ENCODE measurements at regions of chr14 and their contacts with region 1.

Region 1: DNA sequence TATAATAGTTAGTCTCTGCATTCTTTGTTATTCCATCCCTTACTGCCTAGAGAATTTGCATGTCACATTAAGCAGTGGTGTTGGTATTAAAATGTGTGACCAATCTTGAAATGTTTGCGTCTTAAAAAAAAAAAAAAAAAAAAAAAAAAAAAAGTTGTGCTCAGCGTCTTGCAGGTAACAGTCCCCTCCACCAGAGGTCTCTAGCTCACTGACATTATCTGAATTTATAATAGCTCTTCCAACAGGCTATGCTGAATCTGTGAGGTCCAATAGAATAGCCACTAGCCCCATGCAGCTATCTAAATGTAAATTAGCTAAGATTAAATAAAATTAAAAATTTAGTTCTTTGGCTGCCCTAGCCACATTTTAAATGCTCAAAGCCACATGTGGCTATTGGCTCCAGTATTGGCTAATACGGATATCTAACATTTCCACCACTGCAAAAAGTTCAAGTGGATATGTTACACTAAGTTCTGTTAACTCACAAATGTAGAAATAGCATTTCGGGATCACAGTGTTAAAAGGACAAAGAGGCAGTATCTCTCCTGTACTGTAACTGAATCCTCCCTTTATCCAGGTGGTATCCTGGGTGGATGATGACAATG is 28.7 kb downstream of the NKX2-8 start:
- DNase-seq: peak; percentile 14
- ATAC-seq: peak; percentile 36
- H3K4me3 Mint-ChIP-seq: no peak overlapping the region
- H3K27ac Mint-ChIP-seq: no peak overlapping the region
- H3K4me1 Mint-ChIP-seq: no peaks in the 10 kb centered on the region
- H3K27me3 Mint-ChIP-seq: peaks cover 8% of the 10 kb centered on the region

Region 2: GRCh38 chr14:36070031-36070719 is 483.6 kb before region 1 on chr14:
- CTCF ChIA-PET with region 1: interaction called, 7 read pairs
- POLR2A ChIA-PET with region 1: no interaction called
- intact Hi-C with region 1: loop called (anchors 2 kb)
- DNase-seq: peak; percentile 75
- ATAC-seq: peak; percentile 74
- H3K4me3 Mint-ChIP-seq: no peak overlapping the region
- H3K27ac Mint-ChIP-seq: no peak overlapping the region
- H3K4me1 Mint-ChIP-seq: no peaks in the 10 kb centered on the region
- H3K27me3 Mint-ChIP-seq: peaks cover 19% of the 10 kb centered on the region

Region 3: GRCh38 chr14:36538051-36538450 is 15.7 kb before region 1 on chr14:
- CTCF ChIA-PET with region 1: interaction called, 22 read pairs
- POLR2A ChIA-PET with region 1: no interaction called
- intact Hi-C with region 1: no loop called
- DNase-seq: no peak
- ATAC-seq: no peak
- H3K4me3 Mint-ChIP-seq: no peak overlapping the region
- H3K27ac Mint-ChIP-seq: no peak overlapping the region
- H3K4me1 Mint-ChIP-seq: no peaks in the 10 kb centered on the region
- H3K27me3 Mint-ChIP-seq: peaks cover 32% of the 10 kb centered on the region

Region 4: GRCh38 chr14:36604757-36605505 is 51.2 kb after region 1 on chr14:
- CTCF ChIA-PET with region 1: interaction called, 12 read pairs
- POLR2A ChIA-PET with region 1: no interaction called
- intact Hi-C with region 1: loop called (anchors 1 to 5 kb)
- DNase-seq: peak; percentile 56
- ATAC-seq: peak; percentile 49
- H3K4me3 Mint-ChIP-seq: no peak overlapping the region
- H3K27ac Mint-ChIP-seq: no peak overlapping the region
- H3K4me1 Mint-ChIP-seq: no peaks in the 10 kb centered on the region
- H3K27me3 Mint-ChIP-seq: peaks cover 12% of the 10 kb centered on the region

Region 5: GRCh38 chr14:36941783-36942521 is 388.2 kb after region 1 on chr14:
- CTCF ChIA-PET with region 1: interaction called, 38 read pairs
- POLR2A ChIA-PET with region 1: no interaction called
- intact Hi-C with region 1: loop called (anchors 1 to 5 kb)
- DNase-seq: peak; percentile 78
- ATAC-seq: peak; percentile 58
- H3K4me3 Mint-ChIP-seq: no peak overlapping the region
- H3K27ac Mint-ChIP-seq: no peak overlapping the region
- H3K4me1 Mint-ChIP-seq: no peaks in the 10 kb centered on the region
- H3K27me3 Mint-ChIP-seq: no peaks in the 10 kb centered on the region

Region 6: DNA sequence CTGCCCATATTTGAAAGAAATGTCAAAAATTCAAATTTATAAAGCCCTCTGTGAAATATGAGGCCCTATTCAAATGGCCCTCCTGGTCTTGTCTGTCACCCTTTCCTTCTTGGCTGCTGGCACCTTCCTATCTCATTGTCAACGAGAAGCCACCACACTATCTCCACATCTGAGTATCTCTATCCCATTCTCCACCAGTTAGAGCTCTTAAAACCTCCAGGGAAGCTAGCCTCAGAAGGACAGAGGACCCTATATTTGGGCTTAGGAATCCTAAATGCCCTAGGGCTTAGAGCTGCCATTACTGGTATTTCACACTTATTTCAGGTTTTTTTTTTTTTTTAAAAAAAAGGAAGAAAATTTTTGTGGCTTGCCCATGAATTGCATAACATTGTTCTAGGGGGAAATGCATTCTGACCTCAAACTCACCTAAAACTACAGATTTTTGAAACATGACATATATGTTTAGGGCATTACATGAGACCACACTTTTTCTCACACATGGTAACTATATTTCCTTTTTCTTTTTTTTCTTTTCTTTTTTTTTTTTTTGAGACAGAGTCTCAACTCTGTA is 593.6 kb after region 1 on chr14:
- CTCF ChIA-PET with region 1: no interaction called
- POLR2A ChIA-PET with region 1: no interaction called
- intact Hi-C with region 1: loop called in 1 of 2 experiments (anchors 5 kb)
- DNase-seq: no peak
- ATAC-seq: no peak
- H3K4me3 Mint-ChIP-seq: no peak overlapping the region
- H3K27ac Mint-ChIP-seq: no peak overlapping the region
- H3K4me1 Mint-ChIP-seq: no peaks in the 10 kb centered on the region
- H3K27me3 Mint-ChIP-seq: no peaks in the 10 kb centered on the region

Measured in activated CD4-positive, alpha-beta T cell treated with anti-CD3 and anti-CD28 coated beads for 36 hours (primary cell).